ENCODE measurements at regions of chr20 and their contacts with region 1.

Region 1: DNA sequence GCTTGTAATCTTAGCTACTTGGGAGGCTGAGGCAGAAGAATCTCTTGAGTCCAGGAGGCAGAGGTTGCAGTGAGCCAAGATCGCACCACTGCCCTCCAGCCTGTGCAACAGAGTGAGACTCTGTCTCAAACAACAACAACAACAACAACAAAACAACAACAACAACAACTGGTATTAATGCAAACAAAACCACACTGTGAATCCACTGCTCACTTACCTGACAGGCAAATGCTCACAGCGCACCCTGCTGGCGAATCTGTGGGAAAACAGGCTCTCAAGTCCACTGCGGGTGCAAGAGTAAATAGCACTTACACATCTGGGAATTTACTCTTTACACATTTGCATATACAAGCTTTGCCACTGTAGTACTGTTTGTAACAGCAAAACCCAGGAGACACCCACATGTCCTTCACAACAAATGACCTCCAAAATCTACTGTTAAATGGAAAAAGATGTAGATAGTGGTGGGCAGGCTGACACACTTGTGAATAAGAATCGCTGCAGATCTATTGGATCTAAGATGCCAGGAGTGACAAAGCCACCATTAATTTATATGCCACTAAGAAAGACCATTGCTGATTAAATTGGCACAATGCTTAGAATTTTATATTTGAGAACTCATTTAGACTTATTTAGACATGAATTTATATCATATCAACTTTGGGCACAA is 29.3 kb downstream of the NSFL1C start:
- DNase-seq: peak; percentile 84
- H3K4me3 Mint-ChIP-seq: no peak overlapping the region
- H3K27ac Mint-ChIP-seq: no peak overlapping the region
- H3K4me1 Mint-ChIP-seq: peaks cover 10% of the 10 kb centered on the region
- H3K27me3 Mint-ChIP-seq: no peaks in the 10 kb centered on the region
- CTCF ChIP-seq: peak; percentile 89

Region 2: DNA sequence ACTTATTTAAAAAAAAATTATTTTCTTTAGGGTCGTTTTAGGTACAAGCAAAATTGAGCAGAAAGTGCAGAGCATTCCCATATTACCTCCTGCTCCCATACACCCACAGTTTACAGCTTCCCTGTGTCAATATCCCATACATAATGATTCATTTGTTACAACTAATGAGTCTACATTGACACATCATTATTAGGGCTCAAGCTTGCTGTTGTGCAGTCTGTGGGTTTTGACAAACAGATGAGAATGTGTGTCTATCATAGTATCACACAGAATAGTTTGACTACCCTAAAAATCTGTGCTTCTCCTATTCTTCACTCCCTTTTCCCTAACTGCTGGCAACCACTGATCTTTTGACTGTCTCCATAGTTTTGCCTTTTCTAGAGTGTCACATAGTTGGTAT is 309.5 kb before region 1 on chr20:
- CTCF ChIA-PET with region 1: no interaction called
- POLR2A ChIA-PET with region 1: no interaction called
- intact Hi-C with region 1: no loop called
- DNase-seq: no peak
- H3K4me3 Mint-ChIP-seq: no peak overlapping the region
- H3K27ac Mint-ChIP-seq: no peak overlapping the region
- H3K4me1 Mint-ChIP-seq: peaks cover 4% of the 10 kb centered on the region
- H3K27me3 Mint-ChIP-seq: no peaks in the 10 kb centered on the region
- CTCF ChIP-seq: no peak

Region 3: DNA sequence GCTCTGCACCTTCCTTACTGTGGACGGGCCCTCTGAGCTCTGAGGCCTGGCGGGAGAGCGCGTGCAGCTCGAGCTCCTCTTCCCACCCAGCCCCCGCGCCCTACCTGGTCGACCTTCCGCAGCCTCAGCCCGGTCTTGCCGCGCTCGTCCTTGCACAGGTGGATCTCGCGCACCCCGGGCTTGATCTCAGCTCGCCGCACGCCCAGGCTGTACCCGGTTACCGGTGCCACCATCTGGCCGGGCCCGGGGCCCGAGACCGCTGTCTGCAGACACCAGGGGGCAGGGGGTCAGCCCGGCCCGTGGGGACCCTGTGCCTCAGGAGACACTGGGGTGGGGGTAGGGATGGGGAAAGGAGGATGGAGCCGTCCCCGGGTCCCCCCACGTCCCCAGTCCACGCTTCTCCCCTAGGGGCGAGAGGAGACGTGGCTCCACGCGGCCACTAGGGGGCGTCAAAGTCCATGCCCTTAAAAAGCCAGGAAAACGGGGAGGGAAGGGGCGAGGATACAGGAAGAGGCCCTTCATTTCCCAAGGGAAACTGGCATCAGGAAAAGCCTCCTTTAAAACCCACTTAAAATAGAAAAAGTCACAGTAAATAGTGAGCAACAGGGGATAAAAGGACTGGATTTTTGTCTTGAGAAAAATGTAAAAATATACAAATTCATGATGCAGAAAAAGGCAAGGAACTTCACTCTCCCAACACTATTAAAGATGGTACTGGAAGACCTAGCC is 124.0 kb before region 1 on chr20:
- CTCF ChIA-PET with region 1: interaction called, 42 read pairs
- POLR2A ChIA-PET with region 1: no interaction called
- intact Hi-C with region 1: loop called (anchors 1 kb)
- DNase-seq: peak; percentile 68
- H3K4me3 Mint-ChIP-seq: no peak overlapping the region
- H3K27ac Mint-ChIP-seq: no peak overlapping the region
- H3K4me1 Mint-ChIP-seq: no peaks in the 10 kb centered on the region
- H3K27me3 Mint-ChIP-seq: no peaks in the 10 kb centered on the region
- CTCF ChIP-seq: peak; percentile 94

Region 4: DNA sequence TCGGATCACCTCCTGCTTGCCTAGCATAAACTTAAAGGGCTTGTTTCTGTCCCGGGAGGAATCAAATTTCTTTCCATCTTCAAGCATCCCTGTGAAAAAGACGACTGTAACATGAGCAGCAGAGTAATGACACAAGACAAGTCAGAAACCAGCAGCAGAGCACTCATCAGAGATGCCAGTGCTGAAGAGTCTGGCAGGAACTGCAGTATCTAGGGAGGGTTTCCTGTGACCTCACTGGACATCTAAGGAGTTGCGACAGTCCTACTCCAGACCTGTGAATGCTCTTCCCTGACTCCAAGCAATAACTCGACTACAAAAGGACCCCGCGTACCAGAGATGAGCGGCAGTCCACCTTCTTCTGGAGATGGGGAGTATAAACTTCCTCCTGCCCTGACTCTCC is 61.9 kb before region 1 on chr20:
- CTCF ChIA-PET with region 1: interaction called, 4 read pairs
- POLR2A ChIA-PET with region 1: interaction called, 3 read pairs
- intact Hi-C with region 1: loop called (anchors 10 kb)
- DNase-seq: peak; percentile 61
- H3K4me3 Mint-ChIP-seq: no peak overlapping the region
- H3K27ac Mint-ChIP-seq: peak overlapping the region; percentile 18
- H3K4me1 Mint-ChIP-seq: peaks cover 48% of the 10 kb centered on the region
- H3K27me3 Mint-ChIP-seq: no peaks in the 10 kb centered on the region
- CTCF ChIP-seq: no peak

Region 5: GRCh38 chr20:1401451-1401907 is 35.9 kb before region 1 on chr20:
- CTCF ChIA-PET with region 1: interaction called, 12 read pairs
- POLR2A ChIA-PET with region 1: no interaction called
- intact Hi-C with region 1: no loop called
- DNase-seq: no peak
- H3K4me3 Mint-ChIP-seq: no peak overlapping the region
- H3K27ac Mint-ChIP-seq: no peak overlapping the region
- H3K4me1 Mint-ChIP-seq: peaks cover 17% of the 10 kb centered on the region
- H3K27me3 Mint-ChIP-seq: no peaks in the 10 kb centered on the region
- CTCF ChIP-seq: no peak

Region 6: GRCh38 chr20:1456300-1456699 is 18.9 kb after region 1 on chr20:
- CTCF ChIA-PET with region 1: interaction called, 90 read pairs
- POLR2A ChIA-PET with region 1: interaction called, 5 read pairs
- intact Hi-C with region 1: no loop called
- DNase-seq: no peak
- H3K4me3 Mint-ChIP-seq: no peak overlapping the region
- H3K27ac Mint-ChIP-seq: no peak overlapping the region
- H3K4me1 Mint-ChIP-seq: no peaks in the 10 kb centered on the region
- H3K27me3 Mint-ChIP-seq: no peaks in the 10 kb centered on the region
- CTCF ChIP-seq: no peak

Measured in MCF 10A (cell line).